AG04450 (cell line): ENCODE measurements at regions of chr12 and their contacts with region 1.

Region 1: GRCh38 chr12:116236148-116236731 is 41.3 kb downstream of the MED13L start:
- DNase-seq: no peak
- H3K4me3 ChIP-seq: no peak overlapping the region
- H3K27ac ChIP-seq: no peak overlapping the region
- H3K27me3 ChIP-seq: no peaks in the 10 kb centered on the region
- CTCF ChIP-seq: peak; percentile 65

Region 2: GRCh38 chr12:115998119-115998633 is 238.1 kb before region 1 on chr12:
- CTCF ChIA-PET with region 1: interaction called, 23 read pairs
- POLR2A ChIA-PET with region 1: no interaction called
- DNase-seq: peak; percentile 27
- H3K4me3 ChIP-seq: no peak overlapping the region
- H3K27ac ChIP-seq: no peak overlapping the region
- H3K27me3 ChIP-seq: no peaks in the 10 kb centered on the region
- CTCF ChIP-seq: peak; percentile 66

Region 3: DNA sequence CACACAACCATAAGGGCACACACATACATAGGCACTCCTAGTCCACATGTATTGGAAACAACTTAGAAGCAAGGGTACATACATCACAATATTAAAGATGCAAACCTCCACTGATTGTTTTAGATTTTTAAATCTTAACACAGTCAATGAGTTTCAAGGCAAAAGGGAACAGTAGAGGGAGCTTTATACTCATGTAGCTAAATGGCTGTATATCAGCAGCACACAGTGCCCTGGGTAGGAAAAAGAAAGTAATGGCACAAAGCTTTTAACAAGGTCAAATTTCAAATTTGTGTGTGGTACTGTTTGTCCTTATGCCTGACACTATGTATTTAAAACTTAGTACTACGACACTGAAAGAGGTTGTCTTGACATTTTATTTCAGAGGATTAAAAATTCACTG is 220.7 kb before region 1 on chr12:
- CTCF ChIA-PET with region 1: interaction called, 12 read pairs
- POLR2A ChIA-PET with region 1: no interaction called
- DNase-seq: no peak
- H3K4me3 ChIP-seq: no peak overlapping the region
- H3K27ac ChIP-seq: no peak overlapping the region
- H3K27me3 ChIP-seq: no peaks in the 10 kb centered on the region
- CTCF ChIP-seq: peak; percentile 76

Region 4: DNA sequence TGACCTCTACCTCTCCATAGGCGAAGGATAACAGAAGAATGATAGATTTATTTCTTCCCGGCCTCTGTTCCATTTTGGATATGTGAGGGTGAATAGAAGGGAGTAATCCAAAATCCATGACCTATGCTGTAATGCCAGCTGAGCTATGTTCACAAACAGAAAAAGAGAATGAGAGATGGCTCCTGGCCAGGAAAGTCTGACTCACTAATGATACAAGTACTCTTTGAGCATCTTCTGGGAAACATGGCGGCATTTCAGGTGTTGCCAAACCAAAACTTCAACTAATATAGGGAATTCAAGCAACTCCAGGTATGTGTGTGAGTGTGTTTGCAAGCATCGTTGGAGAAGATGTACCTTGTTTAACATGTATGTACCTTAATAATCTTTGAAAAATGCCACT is 13.9 kb before region 1 on chr12:
- CTCF ChIA-PET with region 1: interaction called, 27 read pairs
- POLR2A ChIA-PET with region 1: no interaction called
- DNase-seq: peak; percentile 75
- H3K4me3 ChIP-seq: no peak overlapping the region
- H3K27ac ChIP-seq: no peak overlapping the region
- H3K27me3 ChIP-seq: no peaks in the 10 kb centered on the region
- CTCF ChIP-seq: no peak

Region 5: GRCh38 chr12:116247377-116247776 is 11.1 kb after region 1 on chr12:
- CTCF ChIA-PET with region 1: interaction called, 12 read pairs
- POLR2A ChIA-PET with region 1: no interaction called
- DNase-seq: peak; percentile 46
- H3K4me3 ChIP-seq: no peak overlapping the region
- H3K27ac ChIP-seq: no peak overlapping the region
- H3K27me3 ChIP-seq: no peaks in the 10 kb centered on the region
- CTCF ChIP-seq: no peak

Region 6: DNA sequence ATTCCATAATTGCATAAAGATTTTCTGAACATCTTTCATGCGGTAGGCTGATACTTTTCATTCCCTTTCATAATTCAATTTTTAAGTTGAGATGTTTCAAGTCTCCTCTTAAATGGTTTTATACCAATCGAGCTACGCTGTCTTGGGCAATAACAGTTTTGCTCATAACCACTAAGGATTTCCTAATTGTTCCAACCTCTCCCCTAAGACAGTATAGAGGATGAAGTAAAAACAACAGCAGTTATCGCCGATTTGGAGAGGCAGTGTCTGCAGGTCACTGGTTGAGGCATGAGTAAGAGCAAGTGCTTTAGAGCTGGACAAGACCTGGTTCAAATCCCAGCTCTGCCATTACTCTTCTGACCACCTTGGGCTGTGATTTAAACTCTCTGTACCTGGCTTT is 48.2 kb after region 1 on chr12:
- CTCF ChIA-PET with region 1: no interaction called
- POLR2A ChIA-PET with region 1: interaction called, 10 read pairs
- DNase-seq: no peak
- H3K4me3 ChIP-seq: no peak overlapping the region
- H3K27ac ChIP-seq: no peak overlapping the region
- H3K27me3 ChIP-seq: no peaks in the 10 kb centered on the region
- CTCF ChIP-seq: no peak